Activated CD8-positive, alpha-beta memory T cell treated with anti-CD3 and anti-CD28 coated beads, Interleukin-2, amount 10 ng/mL, durations not matched to agents 7 days and 5 days (primary cell): ENCODE measurements at regions of chr2 and their contacts with region 1.

Region 1: GRCh38 chr2:70142590-70143313 is 48.1 kb downstream of the C2orf42 start:
- DNase-seq: peak; percentile 100
- ATAC-seq: peak; percentile 72
- H3K4me3 Mint-ChIP-seq: peak overlapping the region; percentile 82
- H3K27ac Mint-ChIP-seq: peak overlapping the region; percentile 99
- H3K4me1 Mint-ChIP-seq: peaks cover 62% of the 10 kb centered on the region
- H3K27me3 Mint-ChIP-seq: no peaks in the 10 kb centered on the region

Region 2: GRCh38 chr2:69581774-69582581 is 560.8 kb before region 1 on chr2:
- CTCF ChIA-PET with region 1: no interaction called
- DNase-seq: peak; percentile 60
- ATAC-seq: peak; percentile 43
- H3K4me3 Mint-ChIP-seq: peak overlapping the region; percentile 57
- H3K27ac Mint-ChIP-seq: peak overlapping the region; percentile 78
- H3K4me1 Mint-ChIP-seq: peaks cover 74% of the 10 kb centered on the region
- H3K27me3 Mint-ChIP-seq: no peaks in the 10 kb centered on the region

Region 3: DNA sequence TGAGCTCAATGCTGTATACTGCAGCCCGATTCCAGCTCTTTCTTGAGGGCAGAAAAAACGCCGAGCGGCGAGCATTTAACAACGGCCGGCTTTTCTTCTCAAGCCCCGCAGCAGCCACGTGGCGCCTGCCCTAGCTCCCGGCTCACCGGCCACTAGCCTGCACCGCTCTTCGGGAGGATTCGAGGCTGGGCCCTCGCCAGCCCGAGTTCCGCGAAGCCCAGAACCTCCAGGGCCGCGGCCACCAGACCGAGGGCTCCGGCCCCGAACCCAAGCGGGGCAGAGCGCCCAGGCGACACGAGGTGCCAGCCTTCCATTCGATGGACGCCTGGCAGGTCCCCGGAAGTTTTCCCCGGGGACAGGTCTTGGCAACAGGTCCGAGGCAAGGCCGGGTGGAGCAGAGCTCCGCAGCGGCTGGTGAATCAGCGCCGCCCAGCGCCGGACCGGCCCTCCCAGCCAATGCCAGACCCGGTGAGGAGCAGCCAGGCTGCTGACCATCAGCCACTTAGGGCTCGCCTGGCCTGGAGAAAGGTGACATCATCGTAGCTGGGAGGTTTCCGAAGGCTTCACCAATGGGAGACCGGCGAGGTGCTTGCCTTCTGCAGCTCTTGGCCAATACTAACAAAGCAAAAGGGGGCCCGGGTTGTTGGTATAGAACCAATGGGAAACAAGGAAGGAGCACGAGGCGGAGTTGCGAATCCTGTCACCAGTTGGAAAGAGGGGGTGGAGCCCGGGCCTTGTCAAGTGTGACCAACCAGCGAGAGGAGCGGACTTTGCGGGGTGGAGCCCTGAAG is 228.4 kb before region 1 on chr2:
- CTCF ChIA-PET with region 1: interaction called, 85 read pairs
- DNase-seq: peak; percentile 100
- ATAC-seq: peak; percentile 91
- H3K4me3 Mint-ChIP-seq: peak overlapping the region; percentile 78
- H3K27ac Mint-ChIP-seq: peak overlapping the region; percentile 86
- H3K4me1 Mint-ChIP-seq: peaks cover 38% of the 10 kb centered on the region
- H3K27me3 Mint-ChIP-seq: no peaks in the 10 kb centered on the region

Region 4: GRCh38 chr2:70014959-70015358 is 127.8 kb before region 1 on chr2:
- CTCF ChIA-PET with region 1: no interaction called
- DNase-seq: no peak
- ATAC-seq: no peak
- H3K4me3 Mint-ChIP-seq: peak overlapping the region; percentile 4
- H3K27ac Mint-ChIP-seq: peak overlapping the region; percentile 32
- H3K4me1 Mint-ChIP-seq: peaks cover 27% of the 10 kb centered on the region
- H3K27me3 Mint-ChIP-seq: no peaks in the 10 kb centered on the region

Region 5: GRCh38 chr2:70070541-70071268 is 72.0 kb before region 1 on chr2:
- CTCF ChIA-PET with region 1: interaction called, 382 read pairs
- DNase-seq: peak; percentile 83
- ATAC-seq: peak; percentile 77
- H3K4me3 Mint-ChIP-seq: peak overlapping the region; percentile 68
- H3K27ac Mint-ChIP-seq: peak overlapping the region; percentile 96
- H3K4me1 Mint-ChIP-seq: peaks cover 46% of the 10 kb centered on the region
- H3K27me3 Mint-ChIP-seq: no peaks in the 10 kb centered on the region

Region 6: DNA sequence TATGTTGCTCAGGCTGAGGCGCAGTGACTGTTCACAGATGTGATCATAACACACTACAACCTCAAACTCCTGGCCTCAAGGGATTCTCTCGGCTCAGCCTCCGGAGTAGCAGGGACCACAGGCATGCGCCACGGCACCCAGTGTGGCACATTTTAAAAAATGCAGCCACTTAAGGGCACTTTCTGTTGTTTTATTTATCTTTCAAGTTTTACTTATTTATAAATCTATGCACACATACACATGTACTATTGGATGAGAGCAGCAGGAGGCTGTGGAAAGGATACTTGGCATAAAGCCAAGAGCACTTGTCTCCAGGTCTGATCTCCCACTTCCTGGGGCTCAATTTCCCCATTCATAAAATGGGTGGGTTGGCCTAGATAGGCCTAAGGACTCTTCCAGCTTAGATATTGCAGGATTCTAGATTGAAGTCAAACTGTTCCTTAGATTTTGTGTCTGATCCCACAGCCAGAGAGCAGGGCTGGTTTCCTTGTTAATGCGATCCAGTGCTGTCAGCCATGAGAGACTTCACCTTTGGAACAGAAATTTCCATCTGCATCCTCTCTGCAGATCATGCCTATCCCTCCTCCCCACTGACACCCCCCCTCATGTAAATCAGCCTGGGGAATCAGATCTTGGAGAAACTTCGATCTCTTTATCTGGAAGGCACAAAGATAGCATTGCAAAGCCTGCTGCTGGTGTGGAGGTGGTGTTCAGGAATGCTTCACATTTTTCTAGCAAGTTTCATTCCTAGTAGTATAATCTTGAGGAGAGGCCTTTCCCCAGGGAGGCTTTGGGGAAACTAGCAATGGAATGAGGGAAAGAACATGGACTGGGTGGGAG is 30.8 kb before region 1 on chr2:
- CTCF ChIA-PET with region 1: interaction called, 23 read pairs
- DNase-seq: no peak
- ATAC-seq: no peak
- H3K4me3 Mint-ChIP-seq: no peak overlapping the region
- H3K27ac Mint-ChIP-seq: peak overlapping the region; percentile 34
- H3K4me1 Mint-ChIP-seq: peaks cover 49% of the 10 kb centered on the region
- H3K27me3 Mint-ChIP-seq: no peaks in the 10 kb centered on the region

Region 7: GRCh38 chr2:70132244-70133126 is 10.3 kb before region 1 on chr2:
- CTCF ChIA-PET with region 1: interaction called, 66 read pairs
- DNase-seq: peak; percentile 68
- ATAC-seq: peak; percentile 54
- H3K4me3 Mint-ChIP-seq: peak overlapping the region; percentile 80
- H3K27ac Mint-ChIP-seq: peak overlapping the region; percentile 100
- H3K4me1 Mint-ChIP-seq: peaks cover 75% of the 10 kb centered on the region
- H3K27me3 Mint-ChIP-seq: no peaks in the 10 kb centered on the region